Mammary epithelial cell (primary cell): ENCODE measurements at regions of chr6 and their contacts with region 1.

Region 1: GRCh38 chr6:170295510-170296422 is 4.9 kb upstream of the DLL1 start:
- DNase-seq: peak; percentile 59
- H3K4me3 ChIP-seq: peak overlapping the region; percentile 56 to 64 (median 57)
- H3K27ac ChIP-seq: peak overlapping the region; percentile 9
- H3K4me1 ChIP-seq: peaks cover 28% of the 10 kb centered on the region
- H3K27me3 ChIP-seq: no peaks in the 10 kb centered on the region
- CTCF ChIP-seq: no peak

Region 2: DNA sequence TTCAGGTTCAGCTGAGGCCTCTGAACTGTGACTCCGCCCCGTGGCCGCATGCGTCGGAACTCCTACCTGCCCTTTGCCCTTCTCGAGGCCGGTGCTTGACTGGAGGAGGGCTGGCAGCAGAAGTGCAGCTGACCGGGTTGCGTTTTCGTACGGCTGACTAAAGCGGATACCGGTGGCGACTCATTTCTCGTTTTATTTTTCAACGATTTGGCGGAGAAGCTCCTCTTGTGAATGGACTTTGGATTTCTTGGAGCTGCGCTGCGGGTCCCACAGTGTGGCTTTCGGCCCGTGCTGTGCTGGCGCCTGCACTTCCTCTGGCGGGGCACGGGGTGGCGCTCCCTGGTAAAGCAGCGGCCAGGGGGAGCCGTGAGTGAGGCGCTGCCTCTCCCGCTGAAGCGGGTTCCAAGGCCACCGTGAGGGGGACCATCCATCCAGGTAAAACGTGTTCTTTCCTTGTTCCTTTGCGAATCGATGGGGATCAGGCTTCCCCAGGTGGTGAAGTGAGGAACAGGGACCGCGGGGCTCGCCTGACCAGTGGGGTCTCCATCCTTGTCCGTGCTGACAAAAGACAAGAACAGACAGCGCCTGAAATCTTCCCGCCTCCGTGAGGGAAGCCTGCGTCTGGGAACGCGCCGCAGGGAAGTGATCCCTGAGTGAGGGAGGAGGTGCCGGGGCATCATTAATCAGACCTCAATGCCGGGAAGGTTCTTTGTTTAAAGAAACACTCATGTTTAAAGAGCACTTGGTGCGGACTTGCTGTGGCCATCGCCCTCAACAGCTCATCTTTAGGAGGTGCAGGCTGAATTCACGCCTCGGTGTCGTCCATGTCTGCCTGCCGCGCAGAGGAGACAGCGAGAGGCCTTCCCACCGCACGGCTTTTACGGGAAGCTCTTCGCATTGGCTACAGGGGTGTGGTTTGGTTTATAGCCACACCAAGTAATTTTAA is 505.5 kb before region 1 on chr6:
- CTCF ChIA-PET with region 1: no interaction called
- dilution Hi-C with region 1: no loop called
- in situ Hi-C with region 1: no loop called
- intact Hi-C with region 1: loop called (anchors 1 kb)
- DNase-seq: peak; percentile 72
- H3K4me3 ChIP-seq: peak overlapping the region; percentile 56 to 57 (median 56)
- H3K27ac ChIP-seq: no peak overlapping the region
- H3K4me1 ChIP-seq: peaks cover 17% of the 10 kb centered on the region
- H3K27me3 ChIP-seq: no peaks in the 10 kb centered on the region
- CTCF ChIP-seq: peak; percentile 98 to 99

Region 3: GRCh38 chr6:169978615-169979513 is 316.9 kb before region 1 on chr6:
- CTCF ChIA-PET with region 1: no interaction called
- dilution Hi-C with region 1: no loop called
- in situ Hi-C with region 1: loop called in 1 of 2 experiments (anchors 25 kb)
- intact Hi-C with region 1: loop called (anchors 2 kb)
- DNase-seq: peak; percentile 92
- H3K4me3 ChIP-seq: no peak overlapping the region
- H3K27ac ChIP-seq: peak overlapping the region; percentile 55
- H3K4me1 ChIP-seq: peaks cover 39% of the 10 kb centered on the region
- H3K27me3 ChIP-seq: peaks cover 2% of the 10 kb centered on the region
- CTCF ChIP-seq: peak in 1 of 2 donors; percentile 23

Region 4: DNA sequence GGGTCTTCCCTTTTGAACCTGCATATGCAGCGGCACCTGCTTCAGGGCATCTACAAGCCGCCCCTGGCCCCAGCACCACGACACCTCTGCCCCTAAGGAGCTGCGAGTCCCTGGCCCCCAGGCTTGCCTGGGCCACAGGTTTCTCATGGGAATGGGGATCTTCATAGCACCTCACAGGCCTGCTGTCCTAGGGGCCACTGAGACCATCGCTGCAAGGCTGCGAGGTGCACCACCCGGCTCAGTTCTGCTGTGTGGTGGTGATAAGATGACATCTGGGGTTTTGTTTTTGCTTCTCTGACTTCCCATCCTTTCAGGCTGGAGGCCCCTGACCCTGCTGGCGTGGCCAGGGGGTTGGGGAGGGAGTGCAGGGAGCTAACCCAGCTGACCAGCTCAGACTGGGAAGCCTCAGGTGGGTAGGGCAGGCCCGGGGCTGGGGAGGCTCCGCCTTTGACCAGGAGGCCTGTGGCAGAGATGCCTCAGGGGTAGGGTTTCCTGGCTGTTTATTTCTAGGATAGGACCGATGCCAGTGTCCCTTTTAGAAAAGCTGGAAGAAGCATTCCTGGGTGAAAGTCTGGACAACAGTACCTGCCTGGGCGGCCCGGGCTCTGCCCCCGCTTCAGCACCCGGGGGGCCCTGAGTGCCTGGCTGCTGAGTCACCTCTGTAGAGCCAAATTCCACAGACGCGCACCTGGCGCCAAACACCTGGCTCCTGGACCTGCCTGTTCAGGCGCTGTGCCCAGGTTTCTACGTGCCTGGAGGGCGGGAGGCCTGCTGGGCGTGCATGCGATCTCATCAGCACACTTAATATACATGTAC is 269.6 kb before region 1 on chr6:
- CTCF ChIA-PET with region 1: no interaction called
- dilution Hi-C with region 1: no loop called
- in situ Hi-C with region 1: no loop called
- intact Hi-C with region 1: loop called (anchors 2 kb)
- DNase-seq: peak; percentile 96
- H3K4me3 ChIP-seq: no peak overlapping the region
- H3K27ac ChIP-seq: peak overlapping the region; percentile 74
- H3K4me1 ChIP-seq: peaks cover 25% of the 10 kb centered on the region
- H3K27me3 ChIP-seq: no peaks in the 10 kb centered on the region
- CTCF ChIP-seq: no peak

Region 5: DNA sequence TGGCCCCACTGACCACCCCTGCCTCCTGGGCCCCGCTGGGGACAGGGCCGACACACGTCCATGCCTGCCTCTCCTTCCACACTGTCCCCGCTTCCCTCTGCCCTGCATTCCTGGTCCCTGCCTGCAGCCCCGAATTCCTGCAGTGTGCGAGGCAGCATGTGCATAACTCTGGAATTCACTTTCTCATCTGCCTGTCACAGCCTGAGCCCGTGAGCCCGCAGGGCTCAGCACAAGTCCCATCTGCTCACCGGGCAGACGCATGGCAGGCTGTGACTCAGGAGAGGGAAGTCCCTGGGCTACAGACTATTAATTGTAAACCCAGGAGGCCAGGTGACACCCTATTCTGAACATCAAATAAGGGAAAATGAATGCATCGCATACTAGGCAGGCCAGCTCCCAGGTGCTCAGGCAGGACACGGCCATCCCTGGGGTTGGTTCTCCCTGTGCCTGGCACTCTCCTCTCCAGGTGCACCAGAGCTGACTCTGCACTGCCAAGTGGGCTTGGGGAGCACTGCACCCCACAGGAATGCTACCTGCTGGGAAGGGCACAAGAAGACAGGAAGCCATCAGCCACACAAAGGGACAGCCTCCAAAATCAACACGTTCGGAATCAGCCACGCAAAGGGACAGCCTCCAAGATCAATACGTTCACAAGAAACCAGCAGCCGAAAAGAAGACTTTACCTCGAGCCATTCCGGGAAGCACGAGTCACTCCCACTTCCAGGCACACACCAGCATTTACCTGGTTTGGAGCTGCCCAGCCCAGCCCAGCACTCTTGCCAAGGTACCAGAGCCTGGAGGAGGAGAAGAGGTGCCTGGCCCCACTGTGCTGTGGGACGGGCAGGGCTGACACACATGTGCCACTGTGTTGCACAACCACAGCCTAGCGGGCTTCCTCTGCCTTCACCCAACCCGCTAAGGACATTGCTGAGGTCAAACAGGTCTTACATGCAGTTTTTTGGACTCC is 70.8 kb before region 1 on chr6:
- CTCF ChIA-PET with region 1: no interaction called
- dilution Hi-C with region 1: no loop called
- in situ Hi-C with region 1: no loop called
- intact Hi-C with region 1: loop called (anchors 5 kb)
- DNase-seq: peak; percentile 98
- H3K4me3 ChIP-seq: peak overlapping the region in 1 of 3 experiments; percentile 14
- H3K27ac ChIP-seq: peak overlapping the region; percentile 92
- H3K4me1 ChIP-seq: peaks cover 58% of the 10 kb centered on the region
- H3K27me3 ChIP-seq: no peaks in the 10 kb centered on the region
- CTCF ChIP-seq: peak; percentile 13 to 15